MCF 10A (cell line): ENCODE measurements at regions of chr20 and their contacts with region 1.

Region 1: GRCh38 chr20:45293041-45294002 is 13.3 kb upstream of the RBPJL start:
- DNase-seq: peak; percentile 79
- H3K4me3 Mint-ChIP-seq: peak overlapping the region; percentile 64
- H3K27ac Mint-ChIP-seq: no peak overlapping the region
- H3K4me1 Mint-ChIP-seq: peaks cover 12% of the 10 kb centered on the region
- H3K27me3 Mint-ChIP-seq: no peaks in the 10 kb centered on the region
- CTCF ChIP-seq: peak; percentile 97

Region 2: GRCh38 chr20:45011108-45011526 is 282.2 kb before region 1 on chr20:
- CTCF ChIA-PET with region 1: interaction called, 46 read pairs
- POLR2A ChIA-PET with region 1: interaction called, 3 read pairs
- intact Hi-C with region 1: loop called (anchors 1 kb)
- DNase-seq: peak; percentile 75
- H3K4me3 Mint-ChIP-seq: no peak overlapping the region
- H3K27ac Mint-ChIP-seq: peak overlapping the region; percentile 6
- H3K4me1 Mint-ChIP-seq: peaks cover 22% of the 10 kb centered on the region
- H3K27me3 Mint-ChIP-seq: no peaks in the 10 kb centered on the region
- CTCF ChIP-seq: peak; percentile 63

Region 3: GRCh38 chr20:45070932-45071632 is 222.2 kb before region 1 on chr20:
- CTCF ChIA-PET with region 1: interaction called, 19 read pairs
- POLR2A ChIA-PET with region 1: interaction called, 4 read pairs
- intact Hi-C with region 1: no loop called
- DNase-seq: peak; percentile 76
- H3K4me3 Mint-ChIP-seq: no peak overlapping the region
- H3K27ac Mint-ChIP-seq: no peak overlapping the region
- H3K4me1 Mint-ChIP-seq: peaks cover 21% of the 10 kb centered on the region
- H3K27me3 Mint-ChIP-seq: no peaks in the 10 kb centered on the region
- CTCF ChIP-seq: no peak

Region 4: GRCh38 chr20:45117581-45117980 is 175.7 kb before region 1 on chr20:
- CTCF ChIA-PET with region 1: interaction called, 133 read pairs
- POLR2A ChIA-PET with region 1: no interaction called
- intact Hi-C with region 1: loop called (anchors 5 kb)
- DNase-seq: no peak
- H3K4me3 Mint-ChIP-seq: no peak overlapping the region
- H3K27ac Mint-ChIP-seq: no peak overlapping the region
- H3K4me1 Mint-ChIP-seq: no peaks in the 10 kb centered on the region
- H3K27me3 Mint-ChIP-seq: peaks cover 26% of the 10 kb centered on the region
- CTCF ChIP-seq: no peak

Region 5: GRCh38 chr20:45174434-45175364 is 118.6 kb before region 1 on chr20 and contains the start of gene PI3:
- CTCF ChIA-PET with region 1: interaction called, 10 read pairs
- POLR2A ChIA-PET with region 1: interaction called, 4 read pairs
- intact Hi-C with region 1: no loop called
- DNase-seq: peak; percentile 99
- H3K4me3 Mint-ChIP-seq: no peak within 1 kb of the TSS
- H3K27ac Mint-ChIP-seq: no peak within 1 kb of the TSS
- H3K4me1 Mint-ChIP-seq: peaks cover 23% of the 10 kb centered on the region
- H3K27me3 Mint-ChIP-seq: no peaks in the 10 kb centered on the region
- CTCF ChIP-seq: no peak
- total RNA-seq, gene PI3: 1.0 and 2.8 TPM in 2 replicates

Region 6: DNA sequence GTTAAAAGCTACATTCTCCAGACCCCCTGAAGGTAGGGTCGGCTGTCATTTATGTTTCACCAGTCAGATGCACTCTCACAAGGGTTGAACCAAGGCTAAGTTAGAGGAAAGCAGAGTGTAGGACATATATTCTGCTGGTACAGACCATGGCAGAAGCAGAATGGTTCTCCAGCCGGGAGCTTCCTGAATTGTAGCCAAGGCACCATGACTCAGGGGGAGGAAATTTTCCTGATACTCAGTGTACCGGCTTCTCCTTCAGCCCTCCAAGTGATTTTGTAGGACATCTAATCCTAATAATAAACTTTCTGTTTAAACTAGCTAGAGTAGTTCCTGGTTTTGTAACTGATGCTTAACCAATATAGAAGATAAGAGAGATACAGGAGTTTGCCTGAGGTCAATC is 24.8 kb before region 1 on chr20:
- CTCF ChIA-PET with region 1: interaction called, 64 read pairs
- POLR2A ChIA-PET with region 1: interaction called, 3 read pairs
- intact Hi-C with region 1: no loop called
- DNase-seq: no peak
- H3K4me3 Mint-ChIP-seq: no peak overlapping the region
- H3K27ac Mint-ChIP-seq: no peak overlapping the region
- H3K4me1 Mint-ChIP-seq: peaks cover 7% of the 10 kb centered on the region
- H3K27me3 Mint-ChIP-seq: no peaks in the 10 kb centered on the region
- CTCF ChIP-seq: no peak

Region 7: DNA sequence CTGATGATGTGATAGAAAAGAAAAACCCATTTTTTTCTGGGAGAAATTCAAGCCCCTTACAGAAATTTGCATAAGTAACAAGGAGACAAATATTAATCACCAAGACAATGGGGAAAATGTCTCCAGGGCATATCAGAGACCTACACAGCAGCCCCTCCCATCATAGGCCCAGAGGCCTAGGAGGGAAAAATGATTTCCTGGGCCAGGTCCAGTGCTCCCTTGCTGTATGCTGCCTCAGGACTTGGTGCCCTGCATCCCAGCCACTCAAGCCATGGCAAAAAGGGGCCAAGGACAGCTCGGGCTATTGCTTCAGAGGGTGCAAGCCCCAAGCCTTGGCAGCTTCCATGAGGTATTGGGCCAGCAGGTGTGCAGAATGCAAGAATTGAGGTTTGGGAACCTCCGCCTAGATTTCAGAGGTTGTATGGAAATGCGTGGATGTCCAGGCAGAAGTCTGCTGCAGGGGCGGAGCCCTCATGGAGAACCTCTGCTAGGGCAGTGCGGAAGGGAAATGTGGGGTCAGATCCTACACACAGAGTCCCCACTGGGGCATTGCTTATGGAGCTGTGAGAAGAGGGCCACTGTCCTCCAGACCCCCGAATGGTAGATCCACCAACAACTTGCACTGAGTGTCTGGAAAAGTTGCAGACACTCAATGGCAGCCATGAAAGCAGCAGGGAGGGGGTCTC is 107.2 kb after region 1 on chr20:
- CTCF ChIA-PET with region 1: no interaction called
- POLR2A ChIA-PET with region 1: no interaction called
- intact Hi-C with region 1: no loop called
- DNase-seq: no peak
- H3K4me3 Mint-ChIP-seq: no peak overlapping the region
- H3K27ac Mint-ChIP-seq: no peak overlapping the region
- H3K4me1 Mint-ChIP-seq: no peaks in the 10 kb centered on the region
- H3K27me3 Mint-ChIP-seq: no peaks in the 10 kb centered on the region
- CTCF ChIP-seq: no peak

Region 8: DNA sequence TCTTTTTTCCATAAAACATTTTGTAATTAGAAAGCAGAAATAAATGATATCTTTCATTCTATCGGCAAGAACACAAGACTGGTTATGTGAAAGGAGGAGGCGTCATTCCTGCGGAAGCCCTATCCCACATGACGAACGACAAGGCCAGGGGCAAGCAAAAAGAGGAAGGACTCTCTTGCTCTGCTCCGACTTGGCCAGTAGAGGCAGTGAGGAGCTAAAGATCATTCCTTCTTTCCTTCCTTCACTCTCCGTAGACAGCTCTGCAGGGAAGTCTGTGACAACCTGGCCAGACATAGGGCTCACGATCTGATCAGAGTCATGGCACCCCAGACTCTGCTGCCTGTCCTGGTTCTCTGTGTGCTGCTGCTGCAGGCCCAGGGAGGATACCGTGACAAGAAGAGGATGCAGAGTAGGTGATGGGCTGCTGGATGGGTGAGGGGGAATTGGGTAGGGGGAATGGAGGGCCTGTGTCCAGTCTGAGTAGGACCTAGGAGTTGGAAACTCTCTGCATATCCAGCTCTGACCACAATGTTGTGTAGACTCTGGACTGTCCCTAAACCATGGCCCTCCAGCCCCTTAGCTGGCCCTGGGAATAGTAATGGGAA is 336.3 kb after region 1 on chr20 and contains the start of gene WFDC10A:
- CTCF ChIA-PET with region 1: no interaction called
- POLR2A ChIA-PET with region 1: no interaction called
- intact Hi-C with region 1: no loop called
- DNase-seq: peak; percentile 72
- H3K4me3 Mint-ChIP-seq: no peak within 1 kb of the TSS
- H3K27ac Mint-ChIP-seq: no peak within 1 kb of the TSS
- H3K4me1 Mint-ChIP-seq: no peaks in the 10 kb centered on the region
- H3K27me3 Mint-ChIP-seq: peaks cover 38% of the 10 kb centered on the region
- CTCF ChIP-seq: peak; percentile 53
- total RNA-seq, gene WFDC10A: not detected in 2 replicates